ENCODE measurements at regions of chr17 and their contacts with region 1.

Region 1: DNA sequence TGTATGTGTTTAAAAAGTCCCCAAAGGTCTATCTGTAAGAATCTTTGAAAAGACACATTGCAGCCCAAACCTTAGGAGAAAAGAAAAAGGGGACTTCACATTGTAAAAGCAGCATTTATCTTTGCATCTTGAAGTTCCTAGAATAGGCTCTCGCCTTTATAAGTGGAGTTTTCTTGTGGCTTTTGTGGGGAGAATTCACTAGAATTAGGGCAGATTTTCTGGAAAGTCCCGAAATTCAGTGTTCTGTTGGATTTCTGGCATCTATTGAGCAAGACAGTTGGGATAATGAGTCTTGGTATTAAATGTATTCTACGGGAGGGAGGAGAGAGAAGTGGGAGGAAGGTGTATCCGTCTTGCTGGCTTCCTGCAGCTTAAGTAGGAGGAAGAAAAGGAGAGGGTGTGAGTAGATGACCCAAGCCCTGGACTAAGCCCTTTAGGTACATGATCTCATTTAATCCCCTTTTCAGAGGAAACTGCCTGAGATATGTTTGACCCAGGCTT is 62.6 kb downstream of the PRKCA start:
- DNase-seq: no peak
- H3K4me3 Mint-ChIP-seq: peak overlapping the region; percentile 72
- H3K27ac Mint-ChIP-seq: peak overlapping the region; percentile 94
- H3K4me1 Mint-ChIP-seq: peaks cover 84% of the 10 kb centered on the region
- H3K27me3 Mint-ChIP-seq: no peaks in the 10 kb centered on the region

Region 2: DNA sequence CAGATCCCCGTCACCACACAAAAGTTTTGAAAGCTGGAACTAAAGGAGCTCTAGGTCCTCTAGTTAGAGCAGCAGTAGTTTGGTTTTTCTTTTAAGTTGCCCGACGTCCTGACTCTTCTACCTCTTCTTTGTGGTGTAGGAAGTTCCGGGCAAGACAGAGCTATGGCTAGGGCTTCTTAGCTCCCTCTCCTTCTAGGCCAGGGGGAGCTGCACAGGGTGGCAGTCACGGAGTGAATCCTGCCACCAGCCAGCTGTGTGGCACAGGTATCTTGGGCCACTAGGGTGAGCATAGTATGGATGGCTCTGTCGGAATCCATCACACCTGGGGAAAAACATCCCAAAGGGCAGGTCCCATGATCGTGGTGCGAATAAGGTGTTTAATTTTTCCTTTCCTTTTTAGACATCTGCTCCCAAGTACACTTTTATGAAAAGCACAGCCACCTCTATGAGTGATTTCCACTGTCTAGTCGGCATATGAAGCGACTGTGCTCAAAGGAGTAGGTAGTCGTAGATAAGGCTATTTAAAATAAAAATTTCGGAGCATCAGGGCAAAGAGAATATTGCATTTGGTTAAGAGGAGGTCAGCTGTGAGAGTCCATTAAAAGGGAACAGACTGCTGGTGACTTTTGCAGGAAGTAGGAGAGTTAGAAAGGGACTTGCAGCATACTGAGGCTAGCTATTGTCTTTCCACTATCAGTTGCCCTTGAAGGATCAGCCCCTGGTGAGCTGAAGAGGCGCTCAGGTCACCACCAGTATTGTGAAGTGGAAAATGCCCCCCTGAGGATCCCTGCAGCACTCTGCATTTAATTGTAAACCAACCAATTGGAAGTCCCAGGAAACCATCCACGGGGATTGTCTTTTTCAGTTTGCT is 60.5 kb before region 1 on chr17:
- intact Hi-C with region 1: loop called (anchors 1 kb)
- DNase-seq: no peak
- H3K4me3 Mint-ChIP-seq: peak overlapping the region; percentile 100
- H3K27ac Mint-ChIP-seq: peak overlapping the region; percentile 97
- H3K4me1 Mint-ChIP-seq: peaks cover 50% of the 10 kb centered on the region
- H3K27me3 Mint-ChIP-seq: no peaks in the 10 kb centered on the region

Region 3: DNA sequence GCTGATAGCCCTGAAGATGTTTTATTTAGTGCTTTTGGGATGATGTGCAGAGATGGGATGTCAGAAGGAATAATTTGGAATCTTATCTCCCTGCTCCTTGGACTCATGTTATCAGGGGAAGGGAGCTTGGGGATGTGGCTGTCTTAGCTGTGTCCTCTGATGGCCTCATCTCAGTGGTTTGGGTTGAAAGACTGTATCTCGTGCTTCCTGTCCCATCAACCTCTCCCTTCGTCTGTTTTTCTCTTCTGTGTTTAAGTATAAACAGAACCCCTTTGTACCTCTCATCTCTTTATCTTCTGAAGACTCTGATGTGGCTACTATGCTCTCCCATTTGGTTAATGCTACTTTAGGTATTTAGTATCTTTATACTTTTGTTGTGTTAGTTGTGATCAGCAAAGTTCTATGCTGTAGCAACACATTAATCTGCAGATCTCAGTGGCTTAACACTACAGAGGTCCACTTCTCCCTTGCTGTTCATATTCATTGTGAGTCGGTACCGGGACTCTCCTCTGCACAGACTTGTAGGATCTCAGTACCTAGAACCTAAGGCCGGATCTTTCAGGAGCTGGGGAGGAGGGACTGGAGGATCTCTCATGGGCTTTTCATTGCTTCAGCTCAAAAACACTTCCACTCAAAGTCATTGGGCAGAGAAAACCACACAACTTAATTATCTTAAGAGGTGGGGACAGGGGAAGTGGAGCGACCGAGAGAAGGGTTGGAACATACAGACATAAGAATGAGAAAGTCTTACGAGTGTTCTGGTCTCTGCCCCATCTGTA is 33.8 kb before region 1 on chr17:
- intact Hi-C with region 1: loop called (anchors 1 kb)
- DNase-seq: peak; percentile 29
- H3K4me3 Mint-ChIP-seq: peak overlapping the region; percentile 69
- H3K27ac Mint-ChIP-seq: peak overlapping the region; percentile 96
- H3K4me1 Mint-ChIP-seq: peaks cover 73% of the 10 kb centered on the region
- H3K27me3 Mint-ChIP-seq: no peaks in the 10 kb centered on the region

Region 4: GRCh38 chr17:66348584-66349165 is 16.4 kb before region 1 on chr17:
- intact Hi-C with region 1: loop called (anchors 2 kb)
- DNase-seq: no peak
- H3K4me3 Mint-ChIP-seq: peak overlapping the region; percentile 19
- H3K27ac Mint-ChIP-seq: peak overlapping the region; percentile 76
- H3K4me1 Mint-ChIP-seq: peaks cover 76% of the 10 kb centered on the region
- H3K27me3 Mint-ChIP-seq: no peaks in the 10 kb centered on the region

Region 5: DNA sequence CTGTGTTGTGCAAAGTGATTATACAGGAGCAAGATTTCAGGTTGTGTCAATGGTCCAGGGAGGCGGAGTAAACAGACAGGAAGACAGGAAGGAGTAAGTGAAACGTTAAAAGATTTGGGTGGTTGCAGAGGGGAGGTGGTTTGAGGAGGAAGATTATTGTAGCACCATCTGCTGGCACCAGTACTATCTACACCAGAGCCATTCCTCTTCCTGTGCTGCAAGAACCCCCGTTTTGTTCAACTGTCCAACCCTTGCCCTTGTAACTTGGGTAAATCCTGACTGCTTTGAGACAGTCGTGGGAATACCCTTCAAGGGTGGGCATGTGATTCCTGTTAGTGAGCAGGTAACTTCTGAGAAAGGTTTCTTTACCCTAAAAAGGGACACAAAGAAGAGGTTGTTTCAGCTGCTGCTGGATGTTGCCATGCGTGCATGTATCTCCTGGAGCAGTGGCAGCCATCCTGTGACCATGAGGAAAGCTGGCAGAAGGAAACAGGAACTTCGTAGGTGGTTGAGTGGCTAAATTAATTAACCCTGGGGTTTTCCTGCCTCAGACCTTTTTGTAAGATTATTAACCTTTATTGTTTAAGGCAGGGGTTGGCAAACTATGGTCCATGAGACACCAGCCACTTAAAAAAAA is 61.5 kb after region 1 on chr17:
- intact Hi-C with region 1: loop called (anchors 2 kb)
- DNase-seq: peak; percentile 40
- H3K4me3 Mint-ChIP-seq: peak overlapping the region; percentile 14
- H3K27ac Mint-ChIP-seq: peak overlapping the region; percentile 62
- H3K4me1 Mint-ChIP-seq: peaks cover 70% of the 10 kb centered on the region
- H3K27me3 Mint-ChIP-seq: no peaks in the 10 kb centered on the region